Uterus (tissue), 4 donors: ENCODE measurements at regions of chr7 and their contacts with region 1.

Region 1: GRCh38 chr7:25894902-25895791 is 256.9 kb upstream of the NFE2L3 start:
- DNase-seq: peak; percentile 41 to 65
- H3K4me3 ChIP-seq: peak overlapping the region in 1 of 2 donors; percentile 10
- H3K27ac ChIP-seq: no peak overlapping the region
- H3K4me1 ChIP-seq: no peaks in the 10 kb centered on the region
- H3K27me3 ChIP-seq: no peaks in the 10 kb centered on the region
- CTCF ChIP-seq: peak; percentile 51 to 78 (median 56)
- POLR2A ChIP-seq: no peak

Region 2: DNA sequence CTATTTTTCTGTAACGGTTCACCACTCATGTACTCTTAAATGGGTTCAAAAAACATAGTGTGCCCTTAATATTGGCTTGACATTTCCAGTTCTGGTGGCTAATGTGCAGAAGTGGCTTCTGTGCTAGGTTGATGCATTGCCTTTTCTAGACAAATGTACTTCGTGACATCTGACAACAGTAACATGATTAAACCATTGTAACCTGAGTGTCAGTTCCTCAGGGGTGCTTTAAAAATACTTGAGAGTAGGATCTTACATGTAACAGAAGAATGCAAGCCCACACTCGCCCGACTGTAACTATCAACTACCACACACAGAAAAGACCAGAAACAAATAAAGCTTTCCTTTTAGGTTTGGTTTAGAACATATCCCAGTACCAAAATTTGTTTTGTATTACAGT is 136.6 kb before region 1 on chr7:
- intact Hi-C with region 1: no loop called
- DNase-seq: no peak
- H3K4me3 ChIP-seq: no peak overlapping the region
- H3K27ac ChIP-seq: no peak overlapping the region
- H3K4me1 ChIP-seq: no peaks in the 10 kb centered on the region
- H3K27me3 ChIP-seq: no peaks in the 10 kb centered on the region
- CTCF ChIP-seq: no peak
- POLR2A ChIP-seq: no peak

Region 3: GRCh38 chr7:25770670-25771069 is 124.5 kb before region 1 on chr7:
- intact Hi-C with region 1: no loop called
- DNase-seq: no peak
- H3K4me3 ChIP-seq: no peak overlapping the region
- H3K27ac ChIP-seq: peak overlapping the region; percentile 56 to 66
- H3K4me1 ChIP-seq: no peaks in the 10 kb centered on the region
- H3K27me3 ChIP-seq: no peaks in the 10 kb centered on the region
- CTCF ChIP-seq: no peak
- POLR2A ChIP-seq: no peak

Region 4: GRCh38 chr7:26061688-26062150 is 166.6 kb after region 1 on chr7:
- intact Hi-C with region 1: loop called (anchors 10 kb)
- DNase-seq: peak; percentile 47 to 49
- H3K4me3 ChIP-seq: no peak overlapping the region
- H3K27ac ChIP-seq: no peak overlapping the region
- H3K4me1 ChIP-seq: no peaks in the 10 kb centered on the region
- H3K27me3 ChIP-seq: no peaks in the 10 kb centered on the region
- CTCF ChIP-seq: peak; percentile 51 to 71 (median 56)
- POLR2A ChIP-seq: no peak

Region 5: DNA sequence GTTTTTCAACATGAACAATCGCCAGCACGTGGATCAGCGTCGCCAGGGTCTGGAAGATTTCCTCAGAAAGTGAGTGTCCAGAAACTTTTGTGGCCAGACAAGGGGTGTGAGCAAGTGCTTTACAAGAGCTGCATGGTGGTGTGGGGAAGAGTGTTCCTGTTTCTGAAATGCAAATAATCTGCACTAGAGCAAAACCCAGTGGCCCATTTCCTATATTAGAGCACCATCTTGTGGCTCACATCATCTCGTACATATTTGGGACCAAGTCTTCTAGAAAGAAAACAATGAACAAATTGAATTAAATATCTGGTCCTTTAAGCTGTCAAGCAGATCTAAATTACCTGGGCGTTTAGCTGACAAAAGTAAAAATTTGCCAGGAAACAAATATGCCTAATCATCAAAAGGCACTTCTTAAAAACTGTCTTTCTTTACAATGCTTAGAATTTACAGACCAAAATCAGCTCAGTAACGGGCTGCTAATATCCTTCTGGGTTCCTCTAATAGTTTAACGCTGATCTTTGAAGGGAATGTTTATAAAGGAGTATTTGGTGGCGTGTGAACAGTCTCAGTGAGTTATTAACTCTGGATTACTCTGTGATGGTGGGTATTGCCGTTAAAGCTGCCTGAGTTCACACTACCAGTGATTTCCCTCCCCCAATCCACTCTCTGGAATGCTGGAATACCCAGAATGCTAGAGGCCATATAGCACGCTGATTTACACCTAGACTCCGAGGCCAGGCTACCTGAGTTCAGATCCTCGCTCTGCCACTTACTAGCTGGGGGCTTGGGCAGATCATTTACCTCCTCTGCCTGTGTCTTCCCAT is 470.1 kb after region 1 on chr7:
- intact Hi-C with region 1: loop called (anchors 10 kb)
- DNase-seq: peak; percentile 44 to 55
- H3K4me3 ChIP-seq: no peak overlapping the region
- H3K27ac ChIP-seq: no peak overlapping the region
- H3K4me1 ChIP-seq: no peaks in the 10 kb centered on the region
- H3K27me3 ChIP-seq: no peaks in the 10 kb centered on the region
- CTCF ChIP-seq: peak; percentile 74 to 89 (median 83)
- POLR2A ChIP-seq: no peak